ENCODE measurements at regions of chr3 and their contacts with region 1.

Region 1: DNA sequence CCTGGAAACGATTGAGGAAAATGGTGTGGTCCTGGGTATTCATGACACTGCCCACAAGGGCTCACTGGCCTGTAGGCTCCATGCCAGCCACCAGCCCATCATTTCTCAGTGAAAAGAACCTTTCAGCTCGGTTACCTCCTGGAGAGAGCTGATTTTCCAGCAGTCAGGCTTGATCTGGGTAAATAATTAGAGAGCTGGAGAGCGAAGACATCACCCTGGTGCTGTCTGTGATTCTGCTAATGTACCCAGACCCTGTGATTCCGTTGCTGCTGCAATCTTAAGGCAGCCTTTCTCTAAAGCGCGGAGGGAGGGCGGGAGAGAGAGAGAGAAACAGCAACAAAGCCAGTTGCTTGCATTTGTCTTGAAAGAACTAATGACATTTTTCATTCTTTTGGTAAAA is 221.9 kb upstream of the TOPAZ1 start:
- DNase-seq: no peak
- ATAC-seq: peak; percentile 68
- H3K4me3 Mint-ChIP-seq: peak overlapping the region; percentile 38
- H3K27ac Mint-ChIP-seq: peak overlapping the region; percentile 69
- H3K4me1 Mint-ChIP-seq: peaks cover 29% of the 10 kb centered on the region
- H3K27me3 Mint-ChIP-seq: peaks cover 28% of the 10 kb centered on the region
- CTCF ChIP-seq: no peak

Region 2: DNA sequence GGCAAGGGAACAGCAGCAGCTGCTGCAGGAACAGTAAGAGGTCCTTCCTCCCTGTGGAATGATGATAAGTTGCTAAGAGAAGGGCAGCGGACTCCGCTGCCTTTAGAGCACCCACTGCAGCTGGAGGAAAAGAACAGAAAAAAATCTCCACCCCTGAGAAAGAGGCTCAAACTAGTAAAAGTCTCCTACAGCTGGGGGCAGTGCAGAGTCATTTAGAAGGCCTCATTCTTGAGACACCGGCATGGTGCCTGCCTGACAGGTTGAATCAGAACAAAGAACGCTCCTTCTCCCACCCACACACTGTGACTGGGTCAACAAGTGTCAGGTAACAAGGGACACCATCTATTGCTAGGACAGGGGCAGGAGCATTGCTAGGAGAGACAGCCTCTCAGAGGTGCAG is 140.6 kb before region 1 on chr3:
- CTCF ChIA-PET with region 1: interaction called, 10 read pairs
- POLR2A ChIA-PET with region 1: no interaction called
- DNase-seq: peak; percentile 76
- ATAC-seq: peak; percentile 98
- H3K4me3 Mint-ChIP-seq: no peak overlapping the region
- H3K27ac Mint-ChIP-seq: no peak overlapping the region
- H3K4me1 Mint-ChIP-seq: peaks cover 25% of the 10 kb centered on the region
- H3K27me3 Mint-ChIP-seq: no peaks in the 10 kb centered on the region
- CTCF ChIP-seq: peak; percentile 28

Measured in WTC11 (cell line).